Caco-2 (cell line): ENCODE measurements at regions of chr2 and their contacts with region 1.

Region 1: GRCh38 chr2:231514103-231514950 is 15.9 kb downstream of the NMUR1 start:
- DNase-seq: peak; percentile 96 to 97
- H3K4me3 ChIP-seq: peak overlapping the region; percentile 68
- H3K4me3 Mint-ChIP-seq: peak overlapping the region; percentile 89
- H3K27ac Mint-ChIP-seq: peak overlapping the region; percentile 95
- H3K4me1 ChIP-seq: no peaks in the 10 kb centered on the region
- H3K4me1 Mint-ChIP-seq: no peaks in the 10 kb centered on the region
- H3K27me3 ChIP-seq: no peaks in the 10 kb centered on the region
- H3K27me3 Mint-ChIP-seq: no peaks in the 10 kb centered on the region
- CTCF ChIP-seq: no peak

Region 2: GRCh38 chr2:231545105-231545902 is 31.0 kb after region 1 on chr2:
- CTCF ChIA-PET with region 1: no interaction called
- POLR2A ChIA-PET with region 1: no interaction called
- intact Hi-C with region 1: no loop called
- DNase-seq: no peak
- H3K4me3 ChIP-seq: no peak overlapping the region
- H3K4me3 Mint-ChIP-seq: no peak overlapping the region
- H3K27ac Mint-ChIP-seq: no peak overlapping the region
- H3K4me1 ChIP-seq: no peaks in the 10 kb centered on the region
- H3K4me1 Mint-ChIP-seq: no peaks in the 10 kb centered on the region
- H3K27me3 ChIP-seq: no peaks in the 10 kb centered on the region
- H3K27me3 Mint-ChIP-seq: no peaks in the 10 kb centered on the region
- CTCF ChIP-seq: no peak

Region 3: DNA sequence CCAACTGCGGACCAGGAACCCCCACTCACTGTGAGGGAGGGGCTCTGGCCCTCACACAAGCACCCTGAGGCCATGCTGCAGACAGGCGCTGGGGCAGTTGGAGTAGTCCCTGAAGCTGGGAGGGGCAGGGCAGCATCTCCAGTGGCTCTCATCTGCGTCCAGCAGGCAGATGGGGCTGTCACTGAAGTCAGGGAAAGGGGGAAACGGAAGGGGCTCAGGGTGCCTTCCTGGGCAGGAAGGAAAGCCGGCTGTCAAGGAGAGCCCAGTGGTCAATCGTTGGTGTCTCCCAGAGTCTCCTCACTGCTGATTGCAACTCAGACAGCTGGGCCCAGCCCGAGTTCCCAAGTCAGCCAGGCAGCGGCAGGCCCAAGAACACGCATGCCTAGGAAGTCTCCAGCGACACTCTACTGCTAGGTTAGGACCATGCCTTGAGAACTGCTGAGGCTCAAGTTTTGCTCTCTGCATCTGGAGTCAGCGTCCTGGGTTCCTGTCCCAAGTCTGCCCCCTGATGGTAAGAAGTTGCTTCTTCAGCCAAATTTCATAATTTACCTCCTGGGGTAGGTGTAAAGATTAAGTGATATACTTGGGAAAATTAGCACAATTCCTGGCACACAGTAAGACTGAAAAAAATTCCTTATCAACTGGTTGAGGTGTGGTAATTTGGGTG is 43.4 kb after region 1 on chr2:
- CTCF ChIA-PET with region 1: interaction called, 3 read pairs
- POLR2A ChIA-PET with region 1: no interaction called
- intact Hi-C with region 1: loop called (anchors 1 kb)
- DNase-seq: peak; percentile 61 to 65
- H3K4me3 ChIP-seq: no peak overlapping the region
- H3K4me3 Mint-ChIP-seq: no peak overlapping the region
- H3K27ac Mint-ChIP-seq: no peak overlapping the region
- H3K4me1 ChIP-seq: no peaks in the 10 kb centered on the region
- H3K4me1 Mint-ChIP-seq: no peaks in the 10 kb centered on the region
- H3K27me3 ChIP-seq: no peaks in the 10 kb centered on the region
- H3K27me3 Mint-ChIP-seq: no peaks in the 10 kb centered on the region
- CTCF ChIP-seq: peak; percentile 39 to 61

Region 4: GRCh38 chr2:231604685-231605606 is 90.6 kb after region 1 on chr2:
- CTCF ChIA-PET with region 1: interaction called, 4 read pairs
- POLR2A ChIA-PET with region 1: no interaction called
- intact Hi-C with region 1: loop called (anchors 2 kb)
- DNase-seq: peak; percentile 95
- H3K4me3 ChIP-seq: peak overlapping the region; percentile 44
- H3K4me3 Mint-ChIP-seq: peak overlapping the region; percentile 63
- H3K27ac Mint-ChIP-seq: peak overlapping the region; percentile 96
- H3K4me1 ChIP-seq: peaks cover 11% of the 10 kb centered on the region
- H3K4me1 Mint-ChIP-seq: peaks cover 8% of the 10 kb centered on the region
- H3K27me3 ChIP-seq: no peaks in the 10 kb centered on the region
- H3K27me3 Mint-ChIP-seq: no peaks in the 10 kb centered on the region
- CTCF ChIP-seq: peak in 1 of 2 experiments; percentile 22